Caco-2 (cell line): ENCODE measurements at regions of chr21 and their contacts with region 1.

Region 1: DNA sequence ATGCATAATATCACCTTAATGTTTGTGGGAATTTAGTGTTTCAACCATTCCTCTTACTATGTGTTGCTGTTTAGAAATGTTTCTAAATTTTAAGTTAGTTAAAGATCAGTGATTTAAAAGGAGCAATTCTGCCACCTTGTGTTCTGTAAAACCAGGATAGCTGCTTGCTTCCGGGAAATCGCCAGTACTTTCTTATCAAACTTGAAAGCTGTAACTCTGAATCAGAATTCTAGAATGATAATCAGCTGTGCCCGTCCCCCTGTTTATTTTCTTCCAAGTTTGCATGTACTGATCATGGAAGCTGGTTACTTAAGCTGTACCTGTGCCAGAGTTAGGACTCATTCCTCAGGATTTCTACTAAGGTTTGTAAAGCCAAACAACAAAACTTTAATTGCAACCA is 656.4 kb downstream of the LTN1 start:
- DNase-seq: peak in 1 of 2 experiments; percentile 33
- H3K4me3 ChIP-seq: no peak overlapping the region
- H3K4me3 Mint-ChIP-seq: no peak overlapping the region
- H3K27ac Mint-ChIP-seq: no peak overlapping the region
- H3K4me1 ChIP-seq: peaks cover 21% of the 10 kb centered on the region
- H3K4me1 Mint-ChIP-seq: no peaks in the 10 kb centered on the region
- H3K27me3 ChIP-seq: no peaks in the 10 kb centered on the region
- H3K27me3 Mint-ChIP-seq: no peaks in the 10 kb centered on the region
- CTCF ChIP-seq: peak; percentile 59 to 61

Region 2: GRCh38 chr21:27564684-27565301 is 771.5 kb before region 1 on chr21:
- CTCF ChIA-PET with region 1: no interaction called
- POLR2A ChIA-PET with region 1: no interaction called
- intact Hi-C with region 1: loop called (anchors 5 kb)
- DNase-seq: peak; percentile 35 to 46
- H3K4me3 ChIP-seq: no peak overlapping the region
- H3K4me3 Mint-ChIP-seq: no peak overlapping the region
- H3K27ac Mint-ChIP-seq: no peak overlapping the region
- H3K4me1 ChIP-seq: no peaks in the 10 kb centered on the region
- H3K4me1 Mint-ChIP-seq: no peaks in the 10 kb centered on the region
- H3K27me3 ChIP-seq: no peaks in the 10 kb centered on the region
- H3K27me3 Mint-ChIP-seq: no peaks in the 10 kb centered on the region
- CTCF ChIP-seq: peak; percentile 65 to 76

Region 3: DNA sequence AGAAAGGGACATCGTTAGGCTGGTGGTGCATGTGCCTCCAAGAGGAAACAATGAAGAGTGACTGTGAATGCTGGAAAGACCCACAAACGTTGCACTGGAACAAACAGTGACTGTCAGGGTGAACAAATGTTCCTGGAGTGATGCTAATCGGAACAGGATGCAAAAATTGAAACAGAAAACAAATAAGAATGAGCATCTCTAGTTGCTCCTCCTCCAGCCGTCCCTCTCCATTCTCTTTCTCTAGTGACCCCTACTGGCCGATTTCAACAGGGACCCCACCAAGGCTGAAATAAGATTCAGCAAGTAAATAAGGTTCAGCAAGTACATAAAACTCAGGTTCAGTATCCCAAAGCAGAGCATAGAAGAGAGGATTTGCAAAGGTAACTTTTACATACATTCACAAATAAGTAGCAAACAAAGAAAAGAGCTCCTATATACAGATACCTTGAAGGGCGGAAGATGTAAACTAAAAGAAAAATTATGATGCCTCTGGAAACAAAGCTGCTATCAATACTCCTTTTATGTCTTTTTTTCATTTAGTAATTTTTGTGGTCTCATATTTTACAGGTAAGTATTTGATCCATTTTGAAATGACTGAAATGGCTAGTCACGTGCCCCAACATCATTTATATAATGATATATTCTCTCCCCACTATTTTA is 533.4 kb before region 1 on chr21:
- CTCF ChIA-PET with region 1: no interaction called
- POLR2A ChIA-PET with region 1: no interaction called
- intact Hi-C with region 1: loop called (anchors 10 kb)
- DNase-seq: peak in 1 of 2 experiments; percentile 43
- H3K4me3 ChIP-seq: no peak overlapping the region
- H3K4me3 Mint-ChIP-seq: no peak overlapping the region
- H3K27ac Mint-ChIP-seq: no peak overlapping the region
- H3K4me1 ChIP-seq: peaks cover 16% of the 10 kb centered on the region
- H3K4me1 Mint-ChIP-seq: peaks cover 27% of the 10 kb centered on the region
- H3K27me3 ChIP-seq: no peaks in the 10 kb centered on the region
- H3K27me3 Mint-ChIP-seq: peaks cover 3% of the 10 kb centered on the region
- CTCF ChIP-seq: peak; percentile 54 to 55

Region 4: GRCh38 chr21:28186604-28187003 is 149.7 kb before region 1 on chr21:
- CTCF ChIA-PET with region 1: no interaction called
- POLR2A ChIA-PET with region 1: no interaction called
- intact Hi-C with region 1: loop called (anchors 10 kb)
- DNase-seq: no peak
- H3K4me3 ChIP-seq: no peak overlapping the region
- H3K4me3 Mint-ChIP-seq: no peak overlapping the region
- H3K27ac Mint-ChIP-seq: no peak overlapping the region
- H3K4me1 ChIP-seq: no peaks in the 10 kb centered on the region
- H3K4me1 Mint-ChIP-seq: no peaks in the 10 kb centered on the region
- H3K27me3 ChIP-seq: no peaks in the 10 kb centered on the region
- H3K27me3 Mint-ChIP-seq: no peaks in the 10 kb centered on the region
- CTCF ChIP-seq: no peak

Region 5: GRCh38 chr21:28283641-28284490 is 52.4 kb before region 1 on chr21:
- CTCF ChIA-PET with region 1: no interaction called
- POLR2A ChIA-PET with region 1: no interaction called
- intact Hi-C with region 1: loop called (anchors 1 kb)
- DNase-seq: peak; percentile 67 to 69
- H3K4me3 ChIP-seq: no peak overlapping the region
- H3K4me3 Mint-ChIP-seq: peak overlapping the region; percentile 28
- H3K27ac Mint-ChIP-seq: peak overlapping the region; percentile 0
- H3K4me1 ChIP-seq: peaks cover 23% of the 10 kb centered on the region
- H3K4me1 Mint-ChIP-seq: peaks cover 29% of the 10 kb centered on the region
- H3K27me3 ChIP-seq: no peaks in the 10 kb centered on the region
- H3K27me3 Mint-ChIP-seq: no peaks in the 10 kb centered on the region
- CTCF ChIP-seq: no peak

Region 6: DNA sequence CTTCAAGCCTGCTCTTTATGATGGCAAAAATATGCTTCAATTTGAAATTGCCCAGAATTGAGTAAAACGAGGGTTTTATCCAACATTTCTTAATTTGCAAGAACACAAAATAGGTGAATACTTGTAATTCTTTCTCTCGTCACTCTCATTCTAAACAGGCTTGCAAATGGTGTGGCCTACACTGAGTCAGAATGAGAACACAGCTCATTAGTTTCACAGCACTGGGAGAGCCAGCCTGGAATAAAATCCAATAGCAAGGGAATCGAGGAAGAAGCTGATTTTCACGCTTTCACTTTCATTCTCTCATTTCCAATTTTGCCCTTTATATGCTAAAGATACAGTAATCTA is 118.9 kb after region 1 on chr21:
- CTCF ChIA-PET with region 1: no interaction called
- POLR2A ChIA-PET with region 1: no interaction called
- intact Hi-C with region 1: no loop called
- DNase-seq: no peak
- H3K4me3 ChIP-seq: no peak overlapping the region
- H3K4me3 Mint-ChIP-seq: no peak overlapping the region
- H3K27ac Mint-ChIP-seq: no peak overlapping the region
- H3K4me1 ChIP-seq: no peaks in the 10 kb centered on the region
- H3K4me1 Mint-ChIP-seq: no peaks in the 10 kb centered on the region
- H3K27me3 ChIP-seq: no peaks in the 10 kb centered on the region
- H3K27me3 Mint-ChIP-seq: peaks cover 3% of the 10 kb centered on the region
- CTCF ChIP-seq: no peak

Region 7: DNA sequence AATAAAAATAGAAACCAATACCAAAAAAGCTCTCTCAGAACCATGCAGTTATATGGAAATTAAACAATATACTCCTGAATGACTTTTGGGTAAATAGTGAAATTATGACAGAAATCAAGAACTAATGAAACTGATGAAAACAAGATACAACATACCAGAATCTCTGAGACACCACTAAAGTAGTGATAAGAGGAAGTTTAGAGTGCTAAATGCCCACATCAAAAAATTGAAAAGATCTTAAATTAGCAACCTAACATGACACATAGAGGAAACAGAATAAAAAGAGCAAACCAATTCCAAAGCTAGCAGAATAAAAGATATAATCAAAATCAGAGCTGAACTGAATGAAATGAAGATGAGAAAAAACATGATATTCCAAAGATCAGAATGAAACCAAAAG is 225.5 kb after region 1 on chr21:
- CTCF ChIA-PET with region 1: no interaction called
- POLR2A ChIA-PET with region 1: no interaction called
- intact Hi-C with region 1: no loop called
- DNase-seq: no peak
- H3K4me3 ChIP-seq: no peak overlapping the region
- H3K4me3 Mint-ChIP-seq: no peak overlapping the region
- H3K27ac Mint-ChIP-seq: no peak overlapping the region
- H3K4me1 ChIP-seq: no peaks in the 10 kb centered on the region
- H3K4me1 Mint-ChIP-seq: no peaks in the 10 kb centered on the region
- H3K27me3 ChIP-seq: no peaks in the 10 kb centered on the region
- H3K27me3 Mint-ChIP-seq: no peaks in the 10 kb centered on the region
- CTCF ChIP-seq: no peak

Region 8: DNA sequence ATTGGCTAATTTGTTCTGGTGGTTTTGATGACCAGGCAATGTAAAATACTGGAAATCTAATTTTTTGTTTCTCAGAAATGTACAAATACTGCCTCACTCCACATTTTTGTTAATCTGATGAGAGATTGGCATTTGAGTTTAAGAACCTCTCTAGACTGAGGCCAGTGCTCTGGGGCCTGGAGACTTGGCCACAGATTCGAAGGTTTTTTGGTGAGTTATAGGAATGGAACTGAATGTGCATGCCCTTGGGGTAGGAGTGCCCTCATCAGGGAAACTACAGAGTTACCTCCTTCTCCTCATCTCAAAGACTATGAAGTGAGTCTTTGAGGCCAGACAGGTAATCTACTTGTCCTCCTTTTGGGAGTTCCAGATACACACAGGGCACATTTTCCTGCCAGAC is 308.4 kb after region 1 on chr21:
- CTCF ChIA-PET with region 1: no interaction called
- POLR2A ChIA-PET with region 1: no interaction called
- intact Hi-C with region 1: no loop called
- DNase-seq: no peak
- H3K4me3 ChIP-seq: no peak overlapping the region
- H3K4me3 Mint-ChIP-seq: no peak overlapping the region
- H3K27ac Mint-ChIP-seq: no peak overlapping the region
- H3K4me1 ChIP-seq: no peaks in the 10 kb centered on the region
- H3K4me1 Mint-ChIP-seq: no peaks in the 10 kb centered on the region
- H3K27me3 ChIP-seq: no peaks in the 10 kb centered on the region
- H3K27me3 Mint-ChIP-seq: no peaks in the 10 kb centered on the region
- CTCF ChIP-seq: no peak